ENCODE measurements at regions of chr13 and their contacts with region 1.

Region 1: GRCh38 chr13:42110410-42111155 is 62.1 kb downstream of the DGKH start:
- DNase-seq: no peak
- H3K4me3 ChIP-seq: no peak overlapping the region
- H3K27ac ChIP-seq: no peak overlapping the region
- H3K4me1 ChIP-seq: peaks cover 0 to 18% (median 13%) of the 10 kb centered on the region in 4 donors
- H3K27me3 ChIP-seq: no peaks in the 10 kb centered on the region
- CTCF ChIP-seq: peak; percentile 78 to 87 (median 80)
- EP300 ChIP-seq: no peak
- POLR2A ChIP-seq: no peak

Region 2: DNA sequence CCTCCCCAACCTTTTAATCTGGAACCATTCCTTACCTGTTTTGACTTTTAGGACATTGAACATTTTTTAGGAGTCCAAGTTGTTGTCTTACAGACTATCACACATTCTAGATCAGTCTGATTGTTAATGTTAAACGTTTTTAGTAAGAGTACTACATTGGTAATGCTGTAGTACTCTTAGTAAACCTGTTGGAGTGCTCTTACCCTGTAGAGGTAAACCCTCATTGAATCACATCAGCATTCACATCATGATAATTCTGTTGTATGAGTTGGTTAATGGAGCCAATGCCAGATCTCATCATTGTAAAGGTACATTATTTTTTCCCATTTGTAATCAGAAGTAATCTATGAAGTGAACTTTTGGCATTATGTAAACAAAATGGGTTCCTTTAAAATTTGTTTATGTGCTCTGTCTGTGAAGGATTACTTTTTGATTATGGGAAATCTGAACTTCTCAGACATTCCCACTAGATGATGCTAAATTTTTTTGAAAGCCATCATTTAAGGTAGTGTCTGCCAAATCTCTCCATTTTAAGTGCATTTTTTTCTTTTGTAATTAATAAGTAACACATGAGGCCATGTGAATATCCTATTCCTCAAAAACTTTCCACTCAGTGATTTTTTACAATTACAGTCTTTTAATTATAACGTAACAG is 204.9 kb before region 1 on chr13:
- intact Hi-C with region 1: loop called (anchors 5 kb)
- DNase-seq: no peak
- H3K4me3 ChIP-seq: no peak overlapping the region
- H3K27ac ChIP-seq: no peak overlapping the region
- H3K4me1 ChIP-seq: no peaks in the 10 kb centered on the region
- H3K27me3 ChIP-seq: no peaks in the 10 kb centered on the region
- CTCF ChIP-seq: peak; percentile 28 to 52 (median 32)
- EP300 ChIP-seq: no peak
- POLR2A ChIP-seq: no peak

Region 3: DNA sequence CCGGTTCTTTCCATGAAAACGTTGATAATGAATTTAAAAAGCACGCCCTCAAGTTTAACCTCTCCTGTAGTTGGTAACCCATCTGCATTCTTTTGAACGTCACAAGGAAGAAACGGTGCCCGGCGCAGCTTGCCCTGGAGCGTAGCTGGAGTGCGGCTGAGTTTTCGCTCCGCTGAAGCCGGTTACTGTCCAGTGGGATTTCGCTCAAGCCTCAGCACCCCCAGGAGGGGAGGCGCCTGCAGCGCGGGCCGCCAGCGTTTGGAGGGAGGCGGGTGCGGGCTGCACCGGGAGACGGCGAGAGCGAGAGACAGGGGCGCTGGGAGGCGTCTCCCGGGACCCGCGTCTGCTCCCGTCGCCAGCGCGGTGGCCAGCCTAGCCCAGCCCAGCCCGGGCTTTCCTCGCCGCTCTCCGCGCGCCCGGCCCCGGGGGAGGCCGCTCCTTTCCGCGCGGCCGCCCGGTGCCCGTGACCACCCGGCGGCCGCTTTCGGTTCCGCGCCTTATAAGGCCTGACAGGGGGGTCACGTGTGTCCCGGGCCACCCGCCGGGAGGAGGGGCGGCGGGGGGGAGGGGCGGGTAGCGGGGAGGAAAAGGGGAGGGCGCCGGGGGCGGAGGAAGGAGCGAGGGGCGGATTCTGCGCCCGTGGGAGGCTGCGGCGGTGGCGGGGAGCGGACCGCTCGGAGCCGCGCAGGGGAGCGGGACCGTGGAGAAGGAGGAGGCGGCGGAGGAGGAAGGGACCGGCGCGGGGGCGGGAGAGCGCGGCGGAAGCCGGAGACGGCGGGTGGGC is 70.4 kb before region 1 on chr13:
- intact Hi-C with region 1: loop called (anchors 5 kb)
- DNase-seq: peak; percentile 98
- H3K4me3 ChIP-seq: peak overlapping the region; percentile 78 to 90 (median 88)
- H3K27ac ChIP-seq: peak overlapping the region; percentile 96 to 99 (median 98)
- H3K4me1 ChIP-seq: peaks cover 9 to 24% (median 23%) of the 10 kb centered on the region in 4 donors
- H3K27me3 ChIP-seq: no peaks in the 10 kb centered on the region
- CTCF ChIP-seq: peak in 1 of 3 experiments; percentile 21
- EP300 ChIP-seq: no peak
- POLR2A ChIP-seq: peak; percentile 63

Region 4: DNA sequence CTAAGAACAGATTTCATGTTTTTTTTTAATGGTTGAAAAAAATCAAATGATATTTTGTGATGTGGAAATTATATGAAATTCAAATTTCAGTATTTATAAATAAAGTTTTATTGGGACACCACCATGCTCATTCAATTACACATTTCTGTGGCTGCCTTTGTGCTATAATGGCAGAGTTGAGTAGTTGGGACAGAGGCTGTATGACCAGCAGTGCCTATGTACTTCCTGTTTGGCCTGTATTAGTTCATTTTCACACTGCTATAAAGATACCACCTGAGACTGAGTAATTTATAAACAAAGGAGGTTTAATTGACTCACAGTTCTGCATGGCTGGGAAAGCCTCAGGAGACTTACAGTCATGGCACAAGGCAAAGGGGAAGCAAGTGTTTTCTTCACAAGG is 194.9 kb after region 1 on chr13:
- intact Hi-C with region 1: no loop called
- DNase-seq: no peak
- H3K4me3 ChIP-seq: no peak overlapping the region
- H3K27ac ChIP-seq: no peak overlapping the region
- H3K4me1 ChIP-seq: no peaks in the 10 kb centered on the region
- H3K27me3 ChIP-seq: no peaks in the 10 kb centered on the region
- CTCF ChIP-seq: no peak
- EP300 ChIP-seq: no peak
- POLR2A ChIP-seq: no peak

Measured in esophagus muscularis mucosa (tissue), 4 donors.